ENCODE measurements at regions of chr3 and their contacts with region 1.

Region 1: DNA sequence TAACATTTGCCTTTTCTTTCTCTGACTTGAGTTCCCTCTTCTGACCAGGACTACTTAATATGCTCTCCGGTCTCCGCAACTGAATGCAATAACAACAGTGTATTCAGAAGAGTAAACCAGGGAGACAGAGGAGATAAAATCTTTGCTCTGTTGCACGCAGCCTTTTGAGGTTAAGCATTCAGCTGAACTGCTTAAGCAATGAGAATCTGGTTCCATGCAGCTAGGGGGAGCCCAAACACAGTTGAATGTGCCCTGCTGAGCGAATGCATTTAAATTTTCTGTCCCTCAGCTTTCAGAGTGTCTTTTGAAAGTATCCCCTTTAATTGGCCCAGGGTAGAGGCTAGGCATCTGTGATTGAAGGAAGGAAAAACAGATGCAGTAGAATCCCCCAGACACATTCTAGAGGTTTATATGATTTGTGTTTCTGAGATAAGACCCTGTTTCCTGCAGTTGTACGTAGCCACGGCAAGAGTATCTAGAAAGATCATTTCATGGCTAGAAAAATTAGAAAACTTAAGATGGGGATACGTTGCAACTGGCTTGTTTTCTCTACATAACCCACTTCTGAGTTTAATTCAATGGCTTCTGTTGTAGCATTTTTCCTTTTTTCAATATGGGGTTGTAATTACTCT is 309.6 kb downstream of the TUSC7 start:
- DNase-seq: peak in 3 of 6 donors; percentile 30 to 61 (median 50)
- ATAC-seq: peak; percentile 88 to 98 (median 97)
- H3K4me3 ChIP-seq: peak overlapping the region in 1 of 4 donors; percentile 6
- H3K27ac ChIP-seq: no peak overlapping the region
- H3K4me1 ChIP-seq: no peaks in the 10 kb centered on the region
- H3K27me3 ChIP-seq: no peaks in the 10 kb centered on the region
- CTCF ChIP-seq: peak; percentile 44 to 65 (median 54)

Region 2: GRCh38 chr3:117526470-117527079 is 507.4 kb after region 1 on chr3:
- intact Hi-C with region 1: loop called in 2 of 3 experiments (anchors 10 kb)
- DNase-seq: peak in 2 of 6 donors; percentile 11 to 45
- ATAC-seq: peak; percentile 53 to 79 (median 74)
- H3K4me3 ChIP-seq: no peak overlapping the region
- H3K27ac ChIP-seq: no peak overlapping the region
- H3K4me1 ChIP-seq: peaks cover 0 to 2% (median 0%) of the 10 kb centered on the region in 3 donors
- H3K27me3 ChIP-seq: no peaks in the 10 kb centered on the region
- CTCF ChIP-seq: peak in 3 of 4 donors; percentile 30 to 50 (median 50)

Region 3: DNA sequence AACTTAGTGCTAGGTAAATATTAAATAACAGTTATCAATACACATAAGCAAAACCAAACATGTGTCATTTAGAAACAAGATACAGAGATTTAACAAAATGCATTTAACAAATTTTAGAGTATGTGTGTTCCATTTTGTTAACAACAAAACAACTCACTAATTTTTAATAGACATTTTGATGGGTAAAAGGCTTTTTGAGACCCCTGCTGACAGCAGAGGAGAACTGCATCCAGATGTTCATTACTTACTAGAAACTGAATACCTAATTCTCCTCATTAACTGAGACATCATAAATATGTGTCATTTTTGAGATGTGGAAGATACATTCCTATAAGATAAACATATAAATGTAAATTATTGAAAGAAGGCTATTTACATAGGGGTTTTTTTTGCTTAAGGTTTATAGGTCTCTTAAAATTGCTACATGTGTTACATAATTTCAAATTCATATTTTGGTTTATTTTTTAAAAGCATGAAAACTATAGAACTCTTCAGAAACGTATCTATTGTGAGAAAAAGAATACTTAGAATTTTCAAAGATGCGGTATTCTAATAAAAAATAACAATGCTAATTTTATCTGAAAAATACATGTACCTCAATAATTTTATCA is 700.2 kb after region 1 on chr3:
- intact Hi-C with region 1: loop called in 1 of 3 experiments (anchors 10 kb)
- DNase-seq: no peak
- ATAC-seq: peak in 1 of 4 donors; percentile 36
- H3K4me3 ChIP-seq: no peak overlapping the region
- H3K27ac ChIP-seq: no peak overlapping the region
- H3K4me1 ChIP-seq: no peaks in the 10 kb centered on the region
- H3K27me3 ChIP-seq: no peaks in the 10 kb centered on the region
- CTCF ChIP-seq: peak; percentile 24 to 62 (median 48)